Breast epithelium (tissue), 4 donors: ENCODE measurements at regions of chr21 and their contacts with region 1.

Region 1: GRCh38 chr21:43728467-43729390 is 9.8 kb downstream of the PDXK start:
- DNase-seq: peak; percentile 90 to 92
- H3K4me3 ChIP-seq: peak overlapping the region; percentile 29 to 80 (median 52)
- H3K27ac ChIP-seq: peak overlapping the region; percentile 91 to 95
- H3K4me1 ChIP-seq: peaks cover 20 to 43% of the 10 kb centered on the region in 2 donors
- H3K27me3 ChIP-seq: no peaks in the 10 kb centered on the region
- CTCF ChIP-seq: no peak
- POLR2A ChIP-seq: peak; percentile 32

Region 2: DNA sequence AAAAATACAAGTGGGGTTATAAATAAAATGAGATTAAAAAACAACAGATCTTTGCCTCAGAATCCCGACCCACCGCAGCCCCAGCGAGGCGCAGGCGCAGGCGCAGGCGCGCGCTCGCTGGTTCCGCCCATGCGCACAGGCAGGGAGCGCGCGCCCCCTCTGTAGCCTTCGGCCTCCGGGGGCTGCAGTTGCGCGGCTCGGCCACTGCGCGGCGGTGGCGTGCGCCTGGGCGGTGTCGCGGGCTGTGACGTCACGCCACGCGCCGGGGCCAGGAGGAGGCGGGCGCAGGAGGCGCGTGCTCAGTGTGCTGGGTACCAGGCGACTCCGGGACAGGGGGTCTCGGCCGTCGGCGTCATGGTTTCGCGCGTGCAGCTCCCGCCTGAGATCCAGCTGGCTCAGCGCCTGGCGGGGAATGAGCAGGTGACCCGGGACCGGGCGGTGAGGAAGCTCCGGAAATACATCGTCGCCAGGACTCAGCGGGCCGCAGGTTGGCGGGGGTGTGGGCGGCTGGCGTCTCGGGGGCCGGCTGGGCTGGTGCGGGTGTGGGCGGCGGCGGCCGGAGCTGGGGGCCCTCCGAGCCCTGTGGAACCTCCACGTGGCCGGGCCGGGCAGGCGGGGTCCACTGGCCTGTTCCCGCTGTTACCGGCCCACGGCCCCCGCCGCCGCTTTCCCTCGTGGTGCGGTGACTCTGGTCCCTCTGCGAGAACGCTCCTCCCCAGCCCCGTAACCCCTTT is 60.7 kb after region 1 on chr21 and contains the start of gene RRP1:
- intact Hi-C with region 1: loop called (anchors 10 kb)
- DNase-seq: peak; percentile 86 to 87
- H3K4me3 ChIP-seq: peak within 1 kb of the TSS; percentile 79 to 92 (median 86)
- H3K27ac ChIP-seq: peak within 1 kb of the TSS; percentile 83 to 88
- H3K4me1 ChIP-seq: peaks cover 5 to 8% of the 10 kb centered on the region in 2 donors
- H3K27me3 ChIP-seq: no peaks in the 10 kb centered on the region
- CTCF ChIP-seq: peak; percentile 65 to 100 (median 98)
- POLR2A ChIP-seq: peak; percentile 12
- total RNA-seq, gene RRP1: 15.4 to 22.9 (median 16.5) TPM

Region 3: DNA sequence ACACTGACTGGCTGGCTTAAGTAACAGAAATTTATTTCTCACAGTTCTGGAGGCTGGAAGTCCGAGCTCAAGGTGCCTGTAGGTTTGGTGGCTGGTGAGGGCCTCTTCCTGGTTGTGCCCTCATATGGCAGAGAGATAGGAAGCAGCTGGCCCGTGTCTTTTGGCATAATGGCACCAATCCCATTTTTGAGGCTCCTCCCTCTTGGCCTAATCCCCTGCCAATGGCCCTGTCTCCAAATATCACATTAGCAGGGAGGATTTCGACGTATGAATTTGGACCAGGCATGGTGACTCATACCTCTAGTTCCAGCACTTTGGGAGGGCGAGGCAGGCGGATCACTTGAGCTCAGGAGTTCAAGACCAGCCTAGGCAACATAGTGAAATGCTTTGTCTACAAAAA is 173.7 kb after region 1 on chr21:
- intact Hi-C with region 1: no loop called
- DNase-seq: peak in 1 of 2 donors; percentile 34
- H3K4me3 ChIP-seq: no peak overlapping the region
- H3K27ac ChIP-seq: no peak overlapping the region
- H3K4me1 ChIP-seq: no peaks in the 10 kb centered on the region
- H3K27me3 ChIP-seq: no peaks in the 10 kb centered on the region
- CTCF ChIP-seq: no peak
- POLR2A ChIP-seq: no peak

Region 4: GRCh38 chr21:43916691-43917514 is 188.2 kb after region 1 on chr21:
- intact Hi-C with region 1: no loop called
- DNase-seq: no peak
- H3K4me3 ChIP-seq: peak overlapping the region; percentile 7 to 64 (median 46)
- H3K27ac ChIP-seq: no peak overlapping the region
- H3K4me1 ChIP-seq: no peaks in the 10 kb centered on the region
- H3K27me3 ChIP-seq: no peaks in the 10 kb centered on the region
- CTCF ChIP-seq: no peak
- POLR2A ChIP-seq: no peak

Region 5: DNA sequence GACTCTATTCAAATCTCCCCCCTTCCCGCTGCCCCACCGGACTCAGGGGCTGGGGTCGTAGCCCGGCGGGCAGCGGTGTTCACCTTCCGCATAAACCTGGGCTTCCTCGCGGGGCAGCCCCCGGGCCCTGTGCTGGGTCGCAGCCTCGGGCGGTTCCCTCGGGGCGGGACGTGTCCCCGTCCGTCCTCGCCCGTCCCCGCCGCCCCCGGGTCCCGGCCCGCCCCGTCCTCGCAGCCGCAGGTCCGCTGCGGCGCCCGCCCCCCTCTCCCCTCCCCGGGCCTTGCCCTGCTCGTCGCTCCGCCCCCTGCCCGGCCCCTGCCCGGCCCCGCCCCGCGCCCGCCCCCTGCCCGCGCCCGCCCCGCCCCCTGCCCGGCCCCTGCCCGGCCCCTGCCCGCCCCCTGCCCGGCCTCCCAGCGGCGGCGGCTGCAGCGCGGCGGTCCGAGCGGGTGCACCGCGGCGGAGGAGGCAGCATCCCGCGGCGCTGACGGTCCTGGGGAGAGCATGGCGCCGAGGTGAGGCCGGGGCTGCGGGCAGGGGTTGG is 1676.1 kb after region 1 on chr21 and contains the start of gene COL18A1:
- intact Hi-C with region 1: no loop called
- DNase-seq: no peak
- H3K4me3 ChIP-seq: peak within 1 kb of the TSS; percentile 52 to 91 (median 71)
- H3K27ac ChIP-seq: peak within 1 kb of the TSS; percentile 78 to 94
- H3K4me1 ChIP-seq: peaks cover 22 to 23% of the 10 kb centered on the region in 2 donors
- H3K27me3 ChIP-seq: no peaks in the 10 kb centered on the region
- CTCF ChIP-seq: no peak
- POLR2A ChIP-seq: no peak
- total RNA-seq, gene COL18A1: 48.3 to 62.9 (median 55.8) TPM